Cardiac septum (tissue), 1 donor: ENCODE measurements at regions of chr20 and their contacts with region 1.

Region 1: DNA sequence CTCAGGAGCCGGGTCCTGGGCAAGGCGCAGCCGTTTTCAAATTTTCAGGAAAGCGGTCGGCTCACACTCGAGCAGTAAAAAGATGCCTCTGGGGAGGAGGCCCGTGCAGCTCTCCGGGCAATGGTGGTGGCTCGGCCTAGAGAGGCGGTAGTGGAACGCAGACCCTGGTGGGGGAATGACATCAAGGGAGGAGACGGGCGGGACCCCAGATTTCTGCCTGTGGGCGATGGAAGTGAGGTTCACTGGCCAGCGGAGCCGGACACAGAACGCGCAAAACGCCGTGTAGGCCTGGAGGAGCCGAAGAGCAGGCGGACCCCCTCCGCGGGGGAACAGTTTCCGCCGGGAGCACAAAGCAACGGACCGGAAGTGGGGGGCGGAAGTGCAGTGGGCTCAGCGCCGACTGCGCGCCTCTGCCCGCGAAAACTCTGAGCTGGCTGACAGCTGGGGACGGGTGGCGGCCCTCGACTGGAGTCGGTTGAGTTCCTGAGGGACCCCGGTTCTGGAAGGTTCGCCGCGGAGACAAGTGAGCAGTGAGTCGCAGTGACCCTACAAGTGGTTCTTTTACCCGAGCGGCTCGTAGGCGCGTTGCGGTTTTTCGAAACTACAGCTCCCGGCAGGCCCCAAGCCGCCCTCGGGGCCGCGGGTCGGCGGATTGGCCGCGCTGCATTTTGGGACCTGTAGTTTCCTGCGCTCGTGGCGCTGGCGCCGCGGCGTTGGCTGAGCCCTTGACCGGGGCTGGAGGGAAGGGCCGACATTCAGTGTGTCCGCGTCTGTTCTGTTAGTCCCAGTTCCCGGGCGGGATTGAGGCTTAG is at the start of gene RTEL1:
- DNase-seq: peak; percentile 97
- total RNA-seq, gene RTEL1: 10.5 TPM

Region 2: GRCh38 chr20:63409459-63410435 is 248.4 kb before region 1 on chr20:
- intact Hi-C with region 1: no loop called
- DNase-seq: no peak

Region 3: DNA sequence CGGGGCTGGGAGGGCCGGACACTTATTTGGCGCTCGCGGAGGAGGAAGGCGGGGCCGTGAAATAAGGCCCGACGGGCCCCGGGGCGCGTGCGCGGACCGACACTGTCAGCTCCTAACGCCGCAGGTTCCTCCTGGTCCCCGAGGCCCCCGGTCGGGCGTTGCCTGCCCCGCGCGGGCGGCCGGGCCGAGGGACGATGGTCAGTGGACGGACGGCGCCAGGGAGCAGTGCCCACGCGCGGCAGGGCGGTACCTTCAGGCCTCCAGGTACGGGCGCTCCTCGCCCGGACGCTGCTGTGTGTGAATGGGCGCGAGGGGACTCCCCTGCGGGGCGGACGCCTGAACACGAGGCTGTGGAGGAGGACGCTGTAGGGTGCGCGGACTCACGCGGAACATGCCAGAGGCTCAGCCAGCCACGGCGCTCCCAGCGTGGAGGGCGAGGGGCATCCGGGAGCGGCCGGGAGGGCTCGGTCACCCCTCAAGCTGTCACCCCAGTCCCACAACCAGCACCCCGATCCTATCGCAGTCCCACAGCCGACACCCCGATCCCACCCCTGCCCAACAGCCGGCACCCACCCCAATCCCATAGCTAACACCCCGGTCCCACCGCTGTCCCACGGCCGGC is 30.9 kb before region 1 on chr20:
- intact Hi-C with region 1: loop called (anchors 1 kb)
- DNase-seq: peak; percentile 97

Region 4: DNA sequence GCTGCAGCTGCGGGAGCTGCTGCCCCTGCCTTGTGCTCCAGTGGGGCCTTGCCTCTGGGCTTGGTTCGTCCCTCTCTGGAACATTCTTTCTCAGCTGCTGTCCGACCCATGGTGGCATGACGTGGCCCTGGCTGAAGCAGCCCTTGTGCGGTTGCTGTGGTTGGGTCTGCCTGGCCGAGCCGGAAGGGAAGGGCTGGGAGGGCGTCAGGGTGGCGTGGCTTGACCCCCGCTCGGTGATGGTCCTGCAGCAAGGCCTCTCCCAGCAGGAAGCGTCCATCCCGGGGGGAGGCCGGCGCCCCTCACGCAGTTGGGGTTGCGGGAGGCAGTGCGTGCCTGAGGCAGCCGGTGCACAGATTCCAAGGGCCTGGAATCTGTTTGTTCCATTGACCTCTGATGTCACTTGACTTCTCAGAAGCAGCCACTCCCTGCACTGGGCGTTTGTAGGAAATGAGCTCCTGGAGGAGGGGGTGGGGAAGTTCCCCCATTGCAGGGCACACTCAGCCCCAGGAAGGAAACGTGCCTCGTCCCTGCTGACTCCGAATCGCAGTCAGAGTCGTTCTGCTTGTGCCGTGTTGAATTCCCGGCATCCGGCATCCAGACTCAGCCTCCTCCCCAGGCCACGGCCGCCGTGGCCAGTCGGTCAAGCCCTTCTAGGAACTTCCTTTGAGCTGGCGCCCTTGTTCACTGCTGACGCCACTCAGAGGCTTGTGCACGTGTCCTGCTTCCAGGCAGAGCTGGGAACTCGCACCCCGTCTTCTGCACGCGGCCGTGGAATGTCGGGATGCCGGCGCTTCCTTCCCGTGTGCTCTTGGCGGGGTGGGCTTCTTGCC is 28.6 kb after region 1 on chr20:
- intact Hi-C with region 1: no loop called
- DNase-seq: peak; percentile 94

Region 5: DNA sequence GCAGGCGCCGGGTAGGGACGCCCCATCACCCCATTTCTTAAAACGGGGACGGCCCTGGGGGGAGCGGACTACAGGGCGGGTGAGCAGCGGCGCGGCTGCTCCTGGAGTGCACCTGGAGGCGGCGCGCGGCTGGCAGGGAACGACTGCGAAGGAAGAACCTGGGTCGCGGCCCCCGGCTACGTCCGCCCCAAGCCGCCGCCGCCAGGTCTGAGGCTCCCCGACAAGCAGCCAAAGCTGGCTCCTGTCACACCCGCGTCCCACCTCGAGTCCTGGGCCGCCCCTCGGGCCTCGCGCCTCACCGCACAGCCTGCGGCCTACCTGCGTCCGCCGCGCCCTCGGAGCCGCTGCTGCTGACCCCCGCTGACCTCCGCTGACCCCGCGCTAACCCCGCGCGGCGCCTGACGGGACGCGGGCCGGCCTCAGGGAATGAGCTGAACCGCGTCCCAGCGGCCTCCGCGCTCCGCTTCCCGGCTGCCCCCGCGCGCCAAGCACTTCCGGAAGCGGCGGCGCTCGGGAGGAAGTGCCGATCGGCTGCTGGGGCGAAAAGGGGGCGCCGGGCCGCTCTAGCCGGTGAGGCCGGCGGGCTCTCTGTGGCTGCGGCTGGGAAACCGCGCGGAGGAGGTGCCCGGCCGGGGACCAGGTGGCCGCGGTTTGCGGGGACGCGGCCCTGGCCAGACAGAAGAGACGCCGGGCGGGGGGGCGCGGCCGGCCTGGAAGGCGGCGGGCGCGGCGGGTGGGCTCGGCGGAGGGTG is 49.6 kb after region 1 on chr20 and contains the starts of genes ARFRP1 and ZGPAT:
- intact Hi-C with region 1: loop called (anchors 2 kb)
- DNase-seq: peak; percentile 96
- total RNA-seq, gene ARFRP1: 40.3 TPM
- total RNA-seq, gene ZGPAT: 16.7 TPM

Region 6: DNA sequence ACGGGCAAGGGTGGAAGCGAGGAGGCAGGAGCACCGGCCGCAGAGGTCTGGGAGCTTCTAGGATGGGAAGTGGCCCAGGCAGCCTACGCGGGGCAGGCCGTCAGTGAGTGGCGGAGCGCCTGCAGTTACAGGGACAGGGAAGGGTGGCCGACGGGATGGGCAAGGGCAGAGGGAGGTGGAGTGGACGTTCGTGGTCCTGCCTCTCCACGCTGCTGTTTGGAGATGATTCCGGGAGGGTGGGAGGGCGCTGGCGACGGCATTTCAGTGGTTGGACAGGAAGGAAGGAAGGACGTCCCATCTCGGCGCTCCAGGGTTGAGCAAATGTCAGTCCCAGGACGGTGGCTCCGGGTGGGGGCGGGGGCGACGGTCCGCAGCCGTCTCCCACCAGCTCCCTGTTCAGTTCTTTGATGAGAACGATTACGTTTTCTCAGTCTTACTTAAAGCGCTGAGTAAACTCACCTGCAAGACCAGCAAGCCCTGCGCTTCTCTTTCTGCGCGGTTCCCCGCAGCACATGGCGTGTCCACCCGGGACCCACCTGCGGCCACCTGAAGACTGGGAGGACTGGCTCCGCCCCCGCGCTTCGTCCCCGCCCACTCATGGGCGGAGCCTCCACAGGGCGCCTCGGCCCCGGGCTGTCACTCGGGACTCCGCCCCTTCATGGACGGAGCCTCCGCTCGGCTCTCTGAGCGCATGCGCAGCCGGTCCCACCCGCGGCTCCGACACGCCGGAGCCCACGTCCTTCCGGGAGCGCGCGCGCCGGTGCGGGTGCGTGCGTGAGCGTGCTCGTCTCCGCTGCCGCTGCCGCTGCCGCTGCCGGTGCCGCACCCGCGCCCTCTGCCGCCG is 236.4 kb after region 1 on chr20 and contains the start of gene DNAJC5:
- intact Hi-C with region 1: no loop called
- DNase-seq: peak; percentile 98
- total RNA-seq, gene DNAJC5: 36.1 TPM